Activated CD4-positive, alpha-beta T cell treated with anti-CD3 and anti-CD28 coated beads for 36 hours (primary cell): ENCODE measurements at regions of chr14 and their contacts with region 1.

Region 1: DNA sequence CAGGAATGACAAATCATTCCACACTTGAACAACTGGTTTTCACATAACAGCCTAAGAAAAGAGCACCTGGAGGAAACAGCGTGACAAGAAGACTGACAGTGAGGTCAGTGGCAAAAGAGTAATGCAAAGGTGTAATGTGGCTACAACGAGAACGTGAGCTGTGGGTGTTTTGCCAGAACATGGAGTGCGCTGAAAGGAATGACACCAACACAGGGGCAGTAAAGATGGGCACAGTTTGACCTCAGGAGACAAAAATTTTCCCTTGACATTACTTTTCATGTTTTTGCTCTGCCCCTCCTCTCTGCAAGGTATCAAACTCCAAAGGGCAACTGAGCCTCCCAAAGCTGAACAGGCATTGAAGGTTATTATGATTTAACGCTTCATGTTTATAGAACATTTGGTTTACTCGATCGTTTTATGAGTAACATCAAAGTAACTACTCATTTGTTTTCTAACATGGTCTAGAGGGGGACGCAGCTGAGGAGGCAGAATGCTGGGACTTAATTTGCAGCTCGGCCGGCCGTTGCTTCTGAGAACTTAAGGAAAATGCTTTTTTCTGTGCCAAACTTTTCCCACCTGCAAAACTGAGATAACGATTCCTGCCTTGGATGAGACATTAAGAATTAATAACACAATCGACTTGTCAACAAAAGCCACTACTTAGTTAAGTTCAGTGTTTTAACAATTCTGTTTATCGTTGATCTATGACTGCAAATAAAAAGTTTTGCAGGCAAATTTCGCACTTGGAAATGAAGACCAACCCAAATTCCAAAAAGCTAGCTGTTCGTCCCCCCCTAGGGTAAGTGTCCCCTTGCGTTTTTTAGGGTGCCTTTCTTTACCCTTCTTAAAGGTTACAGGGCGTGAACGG is 954 bp downstream of the HAUS4 start:
- DNase-seq: no peak
- ATAC-seq: no peak
- H3K4me3 Mint-ChIP-seq: peak overlapping the region; percentile 88
- H3K27ac Mint-ChIP-seq: peak overlapping the region; percentile 90
- H3K4me1 Mint-ChIP-seq: peaks cover 18% of the 10 kb centered on the region
- H3K27me3 Mint-ChIP-seq: no peaks in the 10 kb centered on the region

Region 2: DNA sequence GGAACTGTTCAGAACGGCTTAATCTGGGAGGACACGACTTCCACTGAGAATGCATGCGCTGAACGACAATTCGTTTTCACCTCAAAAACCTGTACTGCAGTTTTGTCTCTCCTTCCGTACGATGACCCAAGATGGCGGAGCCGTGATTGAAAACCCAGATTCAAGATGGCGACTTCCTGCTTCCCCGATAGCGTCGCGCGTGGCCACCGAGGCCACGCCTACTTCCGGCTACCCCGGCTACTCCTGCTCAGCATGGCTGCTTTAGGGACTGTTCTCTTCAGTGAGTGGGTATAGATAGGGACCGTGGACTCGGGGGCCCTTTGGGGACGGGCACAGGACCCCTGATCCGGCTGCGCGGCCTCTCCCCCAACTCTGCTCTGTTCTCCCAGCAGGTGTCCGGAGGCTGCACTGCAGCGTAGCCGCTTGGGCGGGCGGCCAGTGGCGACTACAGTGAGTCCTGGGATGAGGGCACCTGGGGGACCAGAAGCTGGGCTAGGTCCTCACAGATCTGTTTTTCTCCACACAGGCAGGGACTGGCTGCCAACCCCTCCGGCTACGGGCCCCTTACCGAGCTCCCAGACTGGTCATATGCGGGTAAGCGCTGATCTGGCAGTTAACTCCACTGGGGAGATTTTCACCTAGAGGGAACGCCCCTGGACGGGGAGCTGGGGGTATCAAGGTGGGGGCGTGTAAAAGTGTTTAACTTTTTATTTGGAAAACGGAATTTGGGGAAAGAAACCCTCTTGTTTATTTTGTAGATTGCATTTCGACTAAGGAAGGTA is 126.1 kb before region 1 on chr14 and contains the start of gene MRPL52:
- CTCF ChIA-PET with region 1: no interaction called
- POLR2A ChIA-PET with region 1: no interaction called
- intact Hi-C with region 1: loop called in 1 of 2 experiments (anchors 1 kb)
- DNase-seq: peak; percentile 94
- ATAC-seq: peak; percentile 92
- H3K4me3 Mint-ChIP-seq: peak within 1 kb of the TSS; percentile 82
- H3K27ac Mint-ChIP-seq: peak within 1 kb of the TSS; percentile 98
- H3K4me1 Mint-ChIP-seq: peaks cover 26% of the 10 kb centered on the region
- H3K27me3 Mint-ChIP-seq: no peaks in the 10 kb centered on the region
- total RNA-seq, gene MRPL52: 115 to 136 TPM

Region 3: GRCh38 chr14:22929104-22929847 is 26.7 kb before region 1 on chr14 and contains the start of gene PRMT5:
- CTCF ChIA-PET with region 1: interaction called, 31 read pairs
- POLR2A ChIA-PET with region 1: interaction called, 4 read pairs
- intact Hi-C with region 1: loop called (anchors 1 kb)
- DNase-seq: peak; percentile 99
- ATAC-seq: peak; percentile 98
- H3K4me3 Mint-ChIP-seq: no peak within 1 kb of the TSS
- H3K27ac Mint-ChIP-seq: no peak within 1 kb of the TSS
- H3K4me1 Mint-ChIP-seq: peaks cover 39% of the 10 kb centered on the region
- H3K27me3 Mint-ChIP-seq: no peaks in the 10 kb centered on the region
- total RNA-seq, gene PRMT5: 121 to 151 TPM

Region 4: DNA sequence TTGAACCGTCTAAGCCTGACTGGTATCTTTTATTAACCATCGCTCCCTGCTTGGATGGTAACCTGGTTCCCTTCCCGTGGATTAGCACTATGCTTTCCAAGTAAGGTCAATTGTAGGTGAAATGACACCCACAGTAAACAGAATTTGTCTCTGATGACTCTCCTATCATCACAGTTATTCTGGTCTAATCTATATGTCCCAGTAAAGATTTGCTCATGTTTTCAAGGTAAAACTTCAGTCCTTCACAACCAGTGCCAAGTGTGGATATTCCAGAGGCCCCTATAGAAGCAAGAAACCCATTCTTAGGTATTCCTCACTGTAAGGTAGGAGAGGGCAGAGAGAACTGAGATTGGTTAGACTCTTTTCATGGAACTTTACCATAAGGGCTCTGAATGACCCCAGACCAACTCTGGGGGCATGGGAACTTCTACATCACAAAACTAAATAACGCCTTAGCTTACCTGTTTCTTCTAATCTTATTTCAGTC is 10.9 kb after region 1 on chr14:
- CTCF ChIA-PET with region 1: interaction called, 31 read pairs
- POLR2A ChIA-PET with region 1: interaction called, 4 read pairs
- intact Hi-C with region 1: no loop called
- DNase-seq: no peak
- ATAC-seq: no peak
- H3K4me3 Mint-ChIP-seq: no peak overlapping the region
- H3K27ac Mint-ChIP-seq: no peak overlapping the region
- H3K4me1 Mint-ChIP-seq: no peaks in the 10 kb centered on the region
- H3K27me3 Mint-ChIP-seq: no peaks in the 10 kb centered on the region

Region 5: DNA sequence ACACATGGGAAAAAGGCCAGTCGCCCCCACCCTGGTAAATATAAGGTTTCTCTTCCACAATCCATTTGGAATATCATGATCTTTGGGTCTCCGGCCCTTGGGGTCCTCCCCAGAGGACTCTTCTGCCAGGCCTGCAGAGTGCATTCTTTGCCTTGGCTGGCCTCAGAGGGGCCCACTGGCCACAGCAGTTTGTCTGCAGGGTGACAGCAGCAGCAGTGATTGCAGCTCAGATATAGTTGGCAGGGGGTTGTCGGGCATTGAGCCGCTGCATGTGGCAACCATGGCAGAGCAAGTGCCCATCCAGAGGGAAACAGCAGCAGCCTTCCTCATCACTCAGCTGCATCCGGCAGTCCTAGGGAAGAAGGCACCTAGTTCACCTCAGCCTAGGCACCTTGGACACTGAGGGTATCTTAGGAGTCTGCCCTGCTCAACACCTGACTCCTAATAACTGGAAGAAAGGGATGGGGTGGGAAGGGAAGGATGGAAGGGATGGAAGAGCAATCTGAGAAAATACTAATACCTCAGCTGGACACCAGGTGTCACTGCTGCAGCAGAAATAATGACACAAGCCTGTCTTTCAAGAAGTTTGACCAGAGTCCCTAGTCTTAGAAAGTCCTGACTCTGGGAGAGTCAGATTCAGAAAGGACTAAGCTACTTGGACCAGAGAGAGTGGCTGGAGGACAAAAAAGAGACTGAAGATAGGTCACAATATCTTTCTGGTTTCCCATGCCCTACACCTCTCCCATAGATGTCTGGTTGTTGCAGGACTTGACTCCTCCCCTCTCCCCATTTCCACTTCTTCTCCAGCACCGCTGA is 17.5 kb after region 1 on chr14:
- CTCF ChIA-PET with region 1: interaction called, 31 read pairs
- POLR2A ChIA-PET with region 1: no interaction called
- intact Hi-C with region 1: no loop called
- DNase-seq: peak; percentile 56
- ATAC-seq: peak; percentile 71
- H3K4me3 Mint-ChIP-seq: no peak overlapping the region
- H3K27ac Mint-ChIP-seq: no peak overlapping the region
- H3K4me1 Mint-ChIP-seq: no peaks in the 10 kb centered on the region
- H3K27me3 Mint-ChIP-seq: no peaks in the 10 kb centered on the region

Region 6: GRCh38 chr14:23034483-23035302 is 78.8 kb after region 1 on chr14 and contains the start of gene PSMB5:
- CTCF ChIA-PET with region 1: interaction called, 3 read pairs
- POLR2A ChIA-PET with region 1: no interaction called
- intact Hi-C with region 1: loop called in 1 of 2 experiments (anchors 1 kb)
- DNase-seq: peak; percentile 94
- ATAC-seq: peak; percentile 95
- H3K4me3 Mint-ChIP-seq: peak within 1 kb of the TSS; percentile 97
- H3K27ac Mint-ChIP-seq: peak within 1 kb of the TSS; percentile 97
- H3K4me1 Mint-ChIP-seq: peaks cover 36% of the 10 kb centered on the region
- H3K27me3 Mint-ChIP-seq: no peaks in the 10 kb centered on the region
- total RNA-seq, gene PSMB5: 104 to 129 TPM

Region 7: DNA sequence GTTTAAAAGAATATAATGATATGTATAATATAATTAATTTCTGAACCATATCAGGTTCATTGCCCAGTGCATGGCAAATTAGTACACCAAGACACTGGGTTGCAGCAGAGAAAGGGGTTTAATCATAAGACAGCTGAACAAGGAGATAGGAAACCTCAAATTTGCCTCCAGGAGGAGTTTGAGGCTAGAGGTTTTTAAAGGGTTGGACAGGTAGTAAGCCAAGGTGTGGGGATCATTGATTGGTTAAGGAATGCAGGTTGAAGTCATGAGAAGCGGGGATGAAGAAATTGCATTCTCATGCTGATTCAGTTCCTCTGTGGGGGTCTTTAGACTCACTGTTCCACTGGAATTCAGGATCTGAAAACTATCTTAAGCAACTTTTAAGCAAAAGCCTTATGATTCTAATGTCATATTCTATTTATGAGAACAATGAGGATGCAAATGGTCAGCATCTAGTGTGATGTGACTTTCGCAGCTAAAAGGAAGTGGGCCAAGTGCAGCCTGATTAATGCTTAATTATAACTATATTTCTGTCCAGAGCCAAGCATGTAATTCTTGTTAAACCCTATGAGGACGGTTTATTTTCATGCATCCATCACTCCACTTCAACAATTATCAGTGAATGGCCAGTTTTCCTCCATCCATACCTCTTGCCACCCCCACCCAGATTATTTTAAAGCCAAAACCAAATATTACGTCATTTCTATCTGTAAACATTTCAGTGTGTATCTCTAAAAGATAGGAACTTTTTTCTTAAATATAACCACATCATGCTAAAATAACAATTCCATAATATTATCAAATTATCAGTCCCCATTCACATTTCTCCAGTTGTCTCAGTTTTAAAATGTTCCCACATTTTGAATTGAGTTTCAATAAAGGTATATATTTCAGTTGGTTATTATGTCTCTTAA is 296.7 kb after region 1 on chr14:
- CTCF ChIA-PET with region 1: no interaction called
- POLR2A ChIA-PET with region 1: no interaction called
- intact Hi-C with region 1: no loop called
- DNase-seq: no peak
- ATAC-seq: no peak
- H3K4me3 Mint-ChIP-seq: no peak overlapping the region
- H3K27ac Mint-ChIP-seq: no peak overlapping the region
- H3K4me1 Mint-ChIP-seq: no peaks in the 10 kb centered on the region
- H3K27me3 Mint-ChIP-seq: peaks cover 6% of the 10 kb centered on the region